PC-9 (cell line): ENCODE measurements at regions of chr7 and their contacts with region 1.

Region 1: DNA sequence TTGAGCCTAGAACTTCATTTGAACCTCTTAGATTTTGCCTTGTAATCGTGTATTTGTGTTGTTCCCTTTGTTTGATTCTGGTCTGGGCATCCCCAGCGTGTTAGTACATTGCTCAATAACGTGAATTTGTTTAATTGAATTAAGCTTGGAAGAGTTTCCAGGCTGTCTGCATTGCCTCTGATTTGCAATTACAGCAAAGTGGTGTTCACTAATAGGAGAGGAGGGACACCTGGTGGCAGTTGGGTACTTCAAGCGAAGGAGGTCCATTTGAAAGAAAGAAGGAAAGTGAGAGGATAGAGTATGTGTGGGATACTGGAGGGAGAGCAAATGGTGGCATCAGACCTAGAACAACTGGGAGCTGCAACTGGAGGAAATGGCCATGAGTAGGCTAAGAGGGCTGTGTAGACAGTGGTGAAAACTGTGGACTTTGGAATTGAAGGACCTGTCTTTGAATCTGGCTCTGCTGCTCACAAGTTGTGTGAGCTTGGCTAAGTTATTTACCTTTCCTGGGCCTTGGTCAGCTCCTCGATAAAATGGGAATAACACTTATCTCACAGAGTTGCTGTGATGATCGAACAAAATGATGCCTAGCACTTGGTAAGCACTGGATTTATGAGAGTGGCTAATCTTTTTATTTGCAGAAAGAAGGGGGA is 15.1 kb downstream of the LSMEM1 start:
- DNase-seq: peak; percentile 47 to 58
- H3K4me3 ChIP-seq: no peak overlapping the region
- H3K27ac ChIP-seq: no peak overlapping the region
- H3K4me1 ChIP-seq: no peaks in the 10 kb centered on the region
- H3K27me3 ChIP-seq: no peaks in the 10 kb centered on the region
- CTCF ChIP-seq: peak; percentile 80

Region 2: DNA sequence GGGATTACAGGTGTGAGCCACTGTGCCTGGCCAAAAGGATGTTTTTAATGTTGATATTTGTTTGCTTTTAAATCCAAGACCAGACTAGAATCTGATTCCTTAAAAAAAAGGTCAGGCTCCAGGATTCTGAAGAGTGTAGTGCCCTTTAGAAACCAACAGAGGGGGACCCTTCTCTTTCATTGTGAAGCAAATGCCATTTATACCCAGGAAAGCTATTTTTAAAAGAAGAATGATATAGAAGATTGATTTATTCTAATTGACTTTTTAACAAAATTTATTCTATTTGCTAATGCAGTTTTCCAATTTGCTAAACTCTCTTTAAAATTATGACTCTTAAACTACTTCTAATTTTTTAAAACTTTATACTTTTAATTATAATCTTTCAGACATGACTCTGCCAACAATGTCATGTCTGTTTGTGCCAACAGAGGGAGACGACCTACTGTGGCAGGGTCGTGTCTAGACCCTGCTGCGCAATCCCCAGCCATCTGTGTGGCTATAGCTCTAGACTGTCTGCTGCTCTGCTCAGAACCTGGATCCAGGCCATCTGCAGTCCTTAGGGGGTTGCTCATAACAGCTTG is 732.6 kb before region 1 on chr7:
- CTCF ChIA-PET with region 1: interaction called, 4 read pairs
- POLR2A ChIA-PET with region 1: no interaction called
- intact Hi-C with region 1: loop called (anchors 1 kb)
- DNase-seq: no peak
- H3K4me3 ChIP-seq: no peak overlapping the region
- H3K27ac ChIP-seq: no peak overlapping the region
- H3K4me1 ChIP-seq: no peaks in the 10 kb centered on the region
- H3K27me3 ChIP-seq: no peaks in the 10 kb centered on the region
- CTCF ChIP-seq: peak; percentile 88

Region 3: GRCh38 chr7:111873963-111874690 is 621.8 kb before region 1 on chr7:
- CTCF ChIA-PET with region 1: interaction called, 11 read pairs
- POLR2A ChIA-PET with region 1: no interaction called
- intact Hi-C with region 1: no loop called
- DNase-seq: no peak
- H3K4me3 ChIP-seq: no peak overlapping the region
- H3K27ac ChIP-seq: no peak overlapping the region
- H3K4me1 ChIP-seq: no peaks in the 10 kb centered on the region
- H3K27me3 ChIP-seq: no peaks in the 10 kb centered on the region
- CTCF ChIP-seq: no peak

Region 4: DNA sequence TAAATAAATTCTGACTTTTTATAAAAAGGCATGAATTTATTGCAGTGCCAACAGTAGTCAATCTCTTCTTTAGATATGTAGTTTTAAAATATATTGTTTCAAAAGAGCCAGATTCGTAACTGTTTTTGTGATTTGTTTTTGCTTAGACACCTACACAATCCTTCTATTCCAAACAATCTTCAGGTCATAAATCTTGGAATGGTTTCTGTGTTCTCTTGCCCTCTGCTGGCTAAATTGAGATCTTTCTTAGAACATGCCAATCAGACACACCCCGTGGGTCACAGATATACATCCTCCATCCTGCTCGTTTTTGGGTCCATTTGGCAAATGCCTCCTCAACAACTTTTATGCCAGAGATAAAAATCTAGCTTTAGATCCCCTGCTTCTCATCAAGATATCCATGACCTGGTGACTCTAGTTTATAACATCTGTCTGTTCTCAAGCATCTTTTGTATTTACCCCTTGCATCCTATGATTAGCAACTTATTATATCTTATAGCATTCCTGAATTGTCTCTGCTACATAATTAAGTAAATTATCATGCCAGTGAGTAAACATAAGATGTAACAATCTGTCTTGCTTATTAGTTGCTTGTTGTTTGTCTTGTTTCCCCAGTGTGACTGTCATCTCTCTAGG is 81.0 kb before region 1 on chr7:
- CTCF ChIA-PET with region 1: no interaction called
- POLR2A ChIA-PET with region 1: no interaction called
- intact Hi-C with region 1: loop called (anchors 5 kb)
- DNase-seq: no peak
- H3K4me3 ChIP-seq: no peak overlapping the region
- H3K27ac ChIP-seq: no peak overlapping the region
- H3K4me1 ChIP-seq: no peaks in the 10 kb centered on the region
- H3K27me3 ChIP-seq: no peaks in the 10 kb centered on the region
- CTCF ChIP-seq: peak; percentile 72

Region 5: GRCh38 chr7:112437043-112437442 is 58.9 kb before region 1 on chr7:
- CTCF ChIA-PET with region 1: no interaction called
- POLR2A ChIA-PET with region 1: no interaction called
- intact Hi-C with region 1: no loop called
- DNase-seq: peak in 1 of 2 experiments; percentile 10
- H3K4me3 ChIP-seq: no peak overlapping the region
- H3K27ac ChIP-seq: no peak overlapping the region
- H3K4me1 ChIP-seq: peaks cover 7% of the 10 kb centered on the region
- H3K27me3 ChIP-seq: no peaks in the 10 kb centered on the region
- CTCF ChIP-seq: no peak

Region 6: DNA sequence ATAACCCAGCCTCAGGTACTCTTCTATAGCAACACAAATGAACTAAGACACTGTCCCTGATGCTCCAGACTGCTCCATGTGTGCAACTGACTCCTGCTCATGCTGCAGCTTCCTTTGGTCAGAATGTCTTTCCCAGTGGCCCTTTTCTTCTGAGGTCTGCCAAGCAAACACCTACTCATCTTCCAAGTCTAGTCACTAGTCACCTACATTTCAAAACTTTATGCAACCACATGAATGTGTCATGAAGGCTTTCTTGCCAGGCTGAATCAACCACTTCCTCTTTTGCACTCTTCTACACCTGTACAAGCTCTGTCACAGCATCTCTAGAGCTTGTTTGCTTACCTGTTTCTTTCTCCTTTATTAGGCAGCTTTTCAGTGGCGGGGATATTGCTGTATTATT is 60.7 kb after region 1 on chr7:
- CTCF ChIA-PET with region 1: no interaction called
- POLR2A ChIA-PET with region 1: no interaction called
- intact Hi-C with region 1: no loop called
- DNase-seq: no peak
- H3K4me3 ChIP-seq: no peak overlapping the region
- H3K27ac ChIP-seq: no peak overlapping the region
- H3K4me1 ChIP-seq: no peaks in the 10 kb centered on the region
- H3K27me3 ChIP-seq: no peaks in the 10 kb centered on the region
- CTCF ChIP-seq: no peak

Region 7: GRCh38 chr7:112669306-112669705 is 173.4 kb after region 1 on chr7:
- CTCF ChIA-PET with region 1: no interaction called
- POLR2A ChIA-PET with region 1: no interaction called
- intact Hi-C with region 1: no loop called
- DNase-seq: no peak
- H3K4me3 ChIP-seq: no peak overlapping the region
- H3K27ac ChIP-seq: no peak overlapping the region
- H3K4me1 ChIP-seq: no peaks in the 10 kb centered on the region
- H3K27me3 ChIP-seq: no peaks in the 10 kb centered on the region
- CTCF ChIP-seq: no peak

Region 8: GRCh38 chr7:112898432-112899290 is 402.7 kb after region 1 on chr7:
- CTCF ChIA-PET with region 1: no interaction called
- POLR2A ChIA-PET with region 1: no interaction called
- intact Hi-C with region 1: loop called (anchors 5 kb)
- DNase-seq: peak; percentile 31 to 45
- H3K4me3 ChIP-seq: no peak overlapping the region
- H3K27ac ChIP-seq: no peak overlapping the region
- H3K4me1 ChIP-seq: no peaks in the 10 kb centered on the region
- H3K27me3 ChIP-seq: no peaks in the 10 kb centered on the region
- CTCF ChIP-seq: peak; percentile 87